HCT116 (cell line): ENCODE measurements at regions of chr14 and their contacts with region 1.

Region 1: DNA sequence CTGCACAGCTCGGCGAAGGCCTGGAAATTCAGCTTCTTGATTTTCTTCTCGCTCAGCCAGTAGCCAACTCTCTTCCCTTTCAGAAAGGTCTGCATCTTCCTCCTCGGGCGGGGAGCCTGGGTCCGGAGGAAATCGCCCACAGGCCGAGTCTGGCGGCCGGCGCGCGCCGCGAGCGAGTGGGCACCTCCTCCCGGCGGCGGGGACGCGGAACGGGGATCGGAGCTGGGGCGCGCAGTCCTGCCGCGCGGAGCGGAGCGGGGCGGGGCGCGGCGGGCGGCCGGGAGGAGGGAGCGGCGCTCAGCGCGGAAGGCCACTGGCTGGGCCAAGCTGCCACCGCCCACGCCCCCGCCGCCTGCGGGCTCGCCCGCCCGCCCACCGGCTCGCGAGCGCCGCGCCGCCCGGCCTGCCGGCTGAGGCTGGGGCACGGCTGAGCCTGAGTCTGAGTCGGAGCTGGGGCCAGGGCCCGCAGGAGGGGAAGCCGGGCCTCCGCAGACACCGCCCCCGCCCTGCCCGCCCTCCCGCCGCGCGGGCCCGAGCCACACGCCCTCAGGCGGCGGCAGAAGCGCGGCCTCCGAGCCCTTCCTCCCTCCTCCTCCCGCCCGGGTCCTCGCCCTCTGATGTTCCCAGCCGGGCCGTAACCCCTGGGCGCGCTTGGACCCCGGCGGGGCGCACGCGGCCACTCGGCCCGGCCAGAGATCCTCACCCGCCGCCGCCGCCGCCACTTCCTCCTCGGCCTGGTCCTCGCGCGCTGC is 480 bp downstream of the ITPK1 start:
- DNase-seq: peak; percentile 51
- ATAC-seq: peak; percentile 83
- H3K4me3 ChIP-seq: peak overlapping the region; percentile 73 to 92
- H3K27ac ChIP-seq: peak overlapping the region; percentile 90
- H3K4me1 ChIP-seq: peaks cover 16 to 34% of the 10 kb centered on the region in 2 experiments; a peak in 3 of 4 replicates
- H3K27me3 ChIP-seq: no peaks in the 10 kb centered on the region
- CTCF ChIP-seq: no peak
- POLR2A ChIP-seq: no peak
- RAD21 ChIP-seq: no peak

Region 2: DNA sequence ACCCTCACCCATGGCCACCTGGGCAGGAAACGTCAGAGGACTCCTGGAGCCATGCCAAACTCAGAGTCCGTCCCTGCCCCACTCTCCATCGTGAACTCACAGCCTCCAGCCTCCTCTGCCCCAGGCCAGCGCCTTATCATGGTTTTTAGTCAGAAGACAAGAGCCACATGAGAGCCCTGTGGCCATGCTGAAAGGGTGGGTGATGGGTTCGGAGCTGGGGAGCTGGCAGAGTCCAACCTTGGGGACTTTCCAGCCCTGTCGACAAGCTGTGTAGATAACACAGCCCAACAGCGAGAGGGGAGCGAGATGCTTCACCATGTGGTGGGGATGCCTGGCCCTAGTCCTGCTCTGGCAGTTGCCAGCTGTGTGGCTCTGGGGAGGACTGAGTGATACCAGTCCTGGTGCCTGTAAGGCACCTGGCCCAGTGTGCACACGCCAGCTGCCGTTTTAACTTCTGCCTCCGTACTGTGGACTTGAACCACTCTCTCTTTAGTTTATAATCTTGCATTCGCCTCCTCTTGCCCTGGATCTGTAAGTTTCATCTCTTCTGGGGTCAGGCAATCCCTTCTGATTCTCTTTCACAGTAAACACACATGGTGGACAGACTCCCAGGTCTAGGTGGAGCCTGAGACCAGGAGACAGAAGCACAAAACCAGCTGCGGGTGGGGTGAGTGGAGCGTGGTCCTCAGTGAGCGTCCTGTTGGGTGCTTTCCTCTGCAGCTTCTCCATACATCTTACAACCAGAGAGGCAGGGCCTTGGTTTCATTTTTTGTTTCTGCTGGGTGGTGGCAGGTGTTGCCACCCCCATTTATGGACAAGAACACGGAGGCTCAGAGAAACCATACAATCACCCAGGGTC is 546.4 kb before region 1 on chr14:
- CTCF ChIA-PET with region 1: no interaction called
- POLR2A ChIA-PET with region 1: no interaction called
- RAD21 ChIA-PET with region 1: no interaction called
- intact Hi-C with region 1: no loop called
- DNase-seq: no peak
- ATAC-seq: no peak
- H3K4me3 ChIP-seq: no peak overlapping the region
- H3K27ac ChIP-seq: no peak overlapping the region
- H3K4me1 ChIP-seq: peaks cover 6 to 23% of the 10 kb centered on the region in 2 experiments; a peak in 2 of 4 replicates
- H3K27me3 ChIP-seq: no peaks in the 10 kb centered on the region
- CTCF ChIP-seq: no peak
- POLR2A ChIP-seq: no peak
- RAD21 ChIP-seq: no peak

Region 3: GRCh38 chr14:92951912-92952471 is 163.3 kb before region 1 on chr14:
- CTCF ChIA-PET with region 1: interaction called, 17 read pairs
- POLR2A ChIA-PET with region 1: interaction called, 3 read pairs
- RAD21 ChIA-PET with region 1: no interaction called
- intact Hi-C with region 1: loop called (anchors 1 kb)
- DNase-seq: peak; percentile 27
- ATAC-seq: peak; percentile 97
- H3K4me3 ChIP-seq: no peak overlapping the region
- H3K27ac ChIP-seq: no peak overlapping the region
- H3K4me1 ChIP-seq: peaks cover 0 to 3% of the 10 kb centered on the region in 2 experiments; a peak in 1 of 4 replicates
- H3K27me3 ChIP-seq: no peaks in the 10 kb centered on the region
- CTCF ChIP-seq: peak; percentile 86 to 92 (median 91)
- POLR2A ChIP-seq: no peak
- RAD21 ChIP-seq: peak; percentile 98

Region 4: GRCh38 chr14:93132470-93133065 is 17.3 kb after region 1 on chr14:
- CTCF ChIA-PET with region 1: interaction called, 46 read pairs
- POLR2A ChIA-PET with region 1: interaction called, 6 read pairs
- RAD21 ChIA-PET with region 1: interaction called, 9 read pairs
- intact Hi-C with region 1: no loop called
- DNase-seq: no peak
- ATAC-seq: peak; percentile 82
- H3K4me3 ChIP-seq: no peak overlapping the region
- H3K27ac ChIP-seq: no peak overlapping the region
- H3K4me1 ChIP-seq: peaks cover 7 to 11% of the 10 kb centered on the region in 2 experiments
- H3K27me3 ChIP-seq: no peaks in the 10 kb centered on the region
- CTCF ChIP-seq: peak; percentile 47 to 56 (median 51)
- POLR2A ChIP-seq: no peak
- RAD21 ChIP-seq: peak; percentile 55

Region 5: GRCh38 chr14:93160353-93160801 is 45.1 kb after region 1 on chr14:
- CTCF ChIA-PET with region 1: interaction called, 11 read pairs
- POLR2A ChIA-PET with region 1: no interaction called
- RAD21 ChIA-PET with region 1: interaction called in 1 of 2 experiments, 3 read pairs
- intact Hi-C with region 1: no loop called
- DNase-seq: peak; percentile 21
- ATAC-seq: peak; percentile 87
- H3K4me3 ChIP-seq: no peak overlapping the region
- H3K27ac ChIP-seq: no peak overlapping the region
- H3K4me1 ChIP-seq: peaks cover 0 to 8% of the 10 kb centered on the region in 2 experiments; a peak in 2 of 4 replicates
- H3K27me3 ChIP-seq: no peaks in the 10 kb centered on the region
- CTCF ChIP-seq: peak; percentile 34 to 58 (median 52); a peak in 5 of 6 replicates
- POLR2A ChIP-seq: no peak
- RAD21 ChIP-seq: peak; percentile 66

Region 6: GRCh38 chr14:93184388-93185353 is 69.4 kb after region 1 on chr14 and contains the starts of genes LYSET and MOAP1:
- CTCF ChIA-PET with region 1: interaction called, 4 read pairs
- POLR2A ChIA-PET with region 1: interaction called, 3 read pairs
- RAD21 ChIA-PET with region 1: no interaction called
- intact Hi-C with region 1: loop called (anchors 2 kb)
- DNase-seq: no peak
- ATAC-seq: peak; percentile 86
- H3K4me3 ChIP-seq: peak within 1 kb of the TSS; percentile 71 to 94
- H3K27ac ChIP-seq: peak within 1 kb of the TSS; percentile 94
- H3K4me1 ChIP-seq: peaks cover 2 to 16% of the 10 kb centered on the region in 2 experiments; a peak in 3 of 4 replicates
- H3K27me3 ChIP-seq: no peaks in the 10 kb centered on the region
- CTCF ChIP-seq: peak in 2 of 3 experiments; percentile 6 to 31; a peak in 2 of 6 replicates
- POLR2A ChIP-seq: peak; percentile 15
- RAD21 ChIP-seq: no peak
- total RNA-seq, gene LYSET: 19.5 TPM
- total RNA-seq, gene MOAP1: 14.2 TPM

Region 7: DNA sequence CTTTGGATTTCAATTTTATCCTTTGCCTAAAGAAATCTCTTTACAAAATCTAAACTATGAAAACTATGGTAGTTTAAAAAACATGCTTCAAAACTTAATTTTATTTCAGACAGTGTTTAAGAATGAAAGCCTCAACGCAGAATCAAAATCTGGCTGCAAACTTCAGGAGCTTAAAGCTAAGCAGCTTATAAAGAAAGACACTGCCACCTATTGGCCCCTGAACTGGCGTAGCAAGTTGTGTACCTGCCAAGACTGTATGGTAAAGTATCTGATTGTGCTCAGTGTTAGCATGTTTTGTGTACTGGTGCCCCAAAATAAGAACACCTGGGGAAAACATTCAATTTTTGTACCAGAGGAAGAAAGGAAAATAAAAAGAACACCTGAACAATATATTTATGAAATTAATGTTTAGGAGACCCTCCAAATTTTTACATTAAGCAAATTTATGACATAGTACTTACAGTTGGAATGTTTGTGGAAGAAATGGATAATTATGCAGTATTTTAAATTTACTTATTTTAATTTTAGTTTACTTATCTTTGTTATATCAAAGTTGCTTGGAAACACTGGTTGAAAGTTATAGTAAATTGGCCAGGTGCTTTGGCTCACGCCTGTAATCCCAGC is 104.0 kb after region 1 on chr14:
- CTCF ChIA-PET with region 1: interaction called, 27 read pairs
- POLR2A ChIA-PET with region 1: interaction called, 3 read pairs
- RAD21 ChIA-PET with region 1: no interaction called
- intact Hi-C with region 1: no loop called
- DNase-seq: peak; percentile 51
- ATAC-seq: peak; percentile 88
- H3K4me3 ChIP-seq: no peak overlapping the region
- H3K27ac ChIP-seq: no peak overlapping the region
- H3K4me1 ChIP-seq: no peaks in the 10 kb centered on the region
- H3K27me3 ChIP-seq: no peaks in the 10 kb centered on the region
- CTCF ChIP-seq: peak; percentile 66 to 79 (median 74)
- POLR2A ChIP-seq: no peak
- RAD21 ChIP-seq: peak; percentile 77

Region 8: GRCh38 chr14:93619176-93619793 is 504.0 kb after region 1 on chr14:
- CTCF ChIA-PET with region 1: interaction called, 10 read pairs
- POLR2A ChIA-PET with region 1: no interaction called
- RAD21 ChIA-PET with region 1: no interaction called
- intact Hi-C with region 1: loop called (anchors 10 kb)
- DNase-seq: peak; percentile 48
- ATAC-seq: peak; percentile 76
- H3K4me3 ChIP-seq: no peak overlapping the region
- H3K27ac ChIP-seq: no peak overlapping the region
- H3K4me1 ChIP-seq: no peaks in the 10 kb centered on the region
- H3K27me3 ChIP-seq: peaks cover 27% of the 10 kb centered on the region
- CTCF ChIP-seq: peak; percentile 59 to 70 (median 67); a peak in 5 of 6 replicates
- POLR2A ChIP-seq: no peak
- RAD21 ChIP-seq: peak; percentile 81

Region 9: DNA sequence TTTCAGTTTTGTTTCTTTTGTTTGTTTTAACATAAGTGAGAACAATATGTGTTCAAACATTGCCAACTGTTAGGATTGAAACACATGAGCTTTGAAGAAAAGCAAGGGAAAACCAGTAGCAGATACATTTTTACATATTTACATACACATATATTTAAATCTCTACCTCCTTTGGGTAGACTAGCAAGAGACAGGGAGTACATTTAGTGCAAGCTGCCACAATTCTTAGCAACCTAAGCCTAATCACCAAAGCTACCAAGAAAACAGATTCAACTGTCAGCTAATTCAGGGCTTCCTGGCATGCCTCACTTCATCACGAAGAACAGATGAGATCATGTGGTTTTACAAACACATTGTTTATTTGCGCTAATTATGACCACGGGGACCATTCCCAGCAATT is 530.0 kb after region 1 on chr14:
- CTCF ChIA-PET with region 1: no interaction called
- POLR2A ChIA-PET with region 1: no interaction called
- RAD21 ChIA-PET with region 1: no interaction called
- intact Hi-C with region 1: no loop called
- DNase-seq: no peak
- ATAC-seq: no peak
- H3K4me3 ChIP-seq: no peak overlapping the region
- H3K27ac ChIP-seq: no peak overlapping the region
- H3K4me1 ChIP-seq: no peaks in the 10 kb centered on the region
- H3K27me3 ChIP-seq: peaks cover 31% of the 10 kb centered on the region
- CTCF ChIP-seq: no peak
- POLR2A ChIP-seq: no peak
- RAD21 ChIP-seq: no peak